ENCODE measurements at regions of chr21 and their contacts with region 1.

Region 1: DNA sequence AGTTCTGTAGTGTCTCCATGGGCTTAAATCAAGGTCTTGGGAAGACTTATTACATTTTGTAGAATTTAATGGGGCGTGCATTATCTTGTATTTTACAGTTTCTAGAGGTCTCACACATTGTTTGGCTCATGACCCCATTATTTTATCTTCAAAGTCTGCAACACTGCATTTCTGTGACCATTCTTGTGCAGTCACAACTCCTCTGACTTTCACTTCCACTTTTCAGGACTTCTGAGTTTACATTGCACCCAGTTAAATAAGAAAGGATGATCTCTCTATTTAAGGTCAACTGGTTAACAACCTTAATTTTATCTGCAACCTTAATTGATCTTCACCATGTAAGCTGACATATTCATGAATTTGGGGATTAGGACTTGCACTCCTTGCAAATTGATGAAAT is 1186.6 kb downstream of the MRPL39 start:
- DNase-seq: no peak
- H3K4me3 ChIP-seq: no peak overlapping the region
- H3K27ac ChIP-seq: no peak overlapping the region
- H3K27me3 ChIP-seq: no peaks in the 10 kb centered on the region
- CTCF ChIP-seq: no peak

Region 2: GRCh38 chr21:24395320-24395923 is 25.3 kb before region 1 on chr21:
- intact Hi-C with region 1: loop called in 1 of 2 experiments (anchors 2 kb)
- DNase-seq: no peak
- H3K4me3 ChIP-seq: no peak overlapping the region
- H3K27ac ChIP-seq: no peak overlapping the region
- H3K27me3 ChIP-seq: no peaks in the 10 kb centered on the region
- CTCF ChIP-seq: no peak

Region 3: GRCh38 chr21:25759573-25759972 is 1338.9 kb after region 1 on chr21:
- intact Hi-C with region 1: no loop called
- DNase-seq: no peak
- H3K4me3 ChIP-seq: no peak overlapping the region
- H3K27ac ChIP-seq: no peak overlapping the region
- H3K27me3 ChIP-seq: no peaks in the 10 kb centered on the region
- CTCF ChIP-seq: no peak